Naive thymus-derived CD4-positive, alpha-beta T cell (primary cell): ENCODE measurements at regions of chr14 and their contacts with region 1.

Region 1: DNA sequence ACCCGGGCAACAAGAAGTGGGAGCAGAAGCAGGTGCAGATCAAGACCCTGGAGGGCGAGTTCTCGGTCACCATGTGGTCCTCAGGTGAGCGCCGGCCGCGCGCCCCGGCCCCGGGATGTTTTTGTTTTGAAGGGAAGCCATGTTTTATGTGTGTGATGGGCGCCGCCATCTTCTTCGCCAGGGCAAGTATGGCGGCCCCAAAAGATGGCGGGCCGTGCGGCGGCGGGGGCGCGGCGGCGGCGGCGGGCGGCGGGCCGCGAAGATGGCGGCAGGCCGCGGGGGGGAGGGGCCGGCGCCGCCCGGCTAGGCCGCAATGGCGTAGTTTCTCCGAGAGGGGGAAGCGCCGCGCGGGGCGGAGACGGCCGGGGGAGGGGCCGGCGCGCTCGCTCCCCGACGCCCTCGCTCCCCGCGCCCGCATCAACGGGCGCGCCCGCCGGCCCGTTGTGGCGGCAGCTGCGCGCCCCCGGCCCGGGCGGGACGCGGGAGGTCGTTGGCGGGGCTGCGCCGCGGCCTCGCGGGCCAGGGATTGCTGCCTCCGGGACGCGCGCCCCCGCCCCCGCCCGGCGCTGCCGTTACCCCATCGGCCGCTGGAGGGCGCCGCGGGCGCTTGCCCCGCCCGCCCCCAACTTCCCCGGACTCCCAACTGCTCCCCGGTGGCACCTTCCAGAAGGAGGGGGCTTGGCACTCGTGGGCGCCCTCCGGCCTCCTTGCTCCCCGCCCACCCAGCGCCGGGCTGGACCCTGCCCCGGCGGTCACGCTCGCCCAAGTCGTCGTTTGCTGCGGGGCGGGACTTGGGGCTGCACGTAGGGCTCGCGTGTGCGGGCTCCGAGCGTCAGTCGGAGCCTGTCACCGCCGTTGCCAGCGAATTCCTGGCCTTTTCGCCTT is 1.1 kb downstream of the YY1 start:
- DNase-seq: peak; percentile 81 to 91 (median 88)
- ATAC-seq: peak; percentile 65
- H3K4me3 ChIP-seq: peak overlapping the region; percentile 85
- H3K4me3 Mint-ChIP-seq: peak overlapping the region; percentile 88 to 100 (median 94)
- H3K27ac ChIP-seq: peak overlapping the region; percentile 98
- H3K27ac Mint-ChIP-seq: peak overlapping the region; percentile 85 to 99 (median 96)
- H3K4me1 ChIP-seq: peaks cover 35 to 43% of the 10 kb centered on the region in 2 donors
- H3K4me1 Mint-ChIP-seq: peaks cover 41 to 69% (median 53%) of the 10 kb centered on the region in 7 donors
- H3K27me3 ChIP-seq: no peaks in the 10 kb centered on the region
- H3K27me3 Mint-ChIP-seq: peaks cover 0 to 2% (median 0%) of the 10 kb centered on the region in 5 donors

Region 2: DNA sequence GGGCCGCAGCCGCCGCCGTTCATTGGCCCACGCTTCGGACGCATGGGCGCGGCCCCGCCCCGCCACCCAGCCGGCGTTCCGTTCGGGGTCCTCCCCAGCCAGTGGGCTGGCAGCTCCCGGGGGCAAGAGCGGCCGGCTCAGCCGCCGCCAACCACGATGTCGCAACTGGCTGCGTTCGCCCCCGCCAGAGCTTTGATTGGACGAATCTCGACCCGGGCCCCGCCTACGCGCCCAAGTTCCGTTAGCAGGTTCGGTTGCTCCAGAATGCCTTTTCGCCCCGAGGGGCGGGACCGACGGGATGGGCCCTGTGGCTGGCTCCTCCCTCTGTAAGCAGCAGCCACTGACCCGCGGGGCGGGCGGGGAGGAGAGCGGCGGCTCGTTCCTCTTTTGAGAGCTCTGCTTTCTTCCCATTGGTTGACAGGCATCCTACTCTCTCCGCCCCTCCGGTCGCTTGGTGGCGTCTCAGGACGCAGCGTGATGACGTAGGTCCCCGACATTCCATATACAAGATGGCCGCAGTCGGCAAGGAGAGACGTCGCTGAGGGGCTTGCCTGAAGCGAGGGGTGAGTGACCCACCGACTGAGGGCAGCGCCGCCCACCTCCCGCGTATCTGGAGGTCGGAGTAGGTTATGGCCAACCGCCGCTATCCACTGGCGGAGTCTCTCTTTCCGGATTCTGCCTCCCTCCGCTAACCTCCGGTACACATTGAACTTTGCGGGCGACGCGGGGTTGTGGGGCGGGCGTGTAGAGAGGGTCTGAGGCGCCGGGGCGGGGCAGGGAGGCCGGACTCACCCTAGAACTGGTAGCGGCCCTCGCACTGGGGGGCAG is 759.0 kb before region 1 on chr14 and contains the start of gene CCNK:
- CTCF ChIA-PET with region 1: no interaction called
- POLR2A ChIA-PET with region 1: no interaction called
- intact Hi-C with region 1: loop called (anchors 1 to 5 kb)
- DNase-seq: peak; percentile 98 to 100 (median 100)
- ATAC-seq: peak; percentile 92
- H3K4me3 ChIP-seq: peak within 1 kb of the TSS; percentile 86
- H3K4me3 Mint-ChIP-seq: peak within 1 kb of the TSS; percentile 89 to 100 (median 98)
- H3K27ac ChIP-seq: peak within 1 kb of the TSS; percentile 93
- H3K27ac Mint-ChIP-seq: peak within 1 kb of the TSS; percentile 95 to 99 (median 98)
- H3K4me1 ChIP-seq: peaks cover 26 to 34% of the 10 kb centered on the region in 2 donors
- H3K4me1 Mint-ChIP-seq: peaks cover 44 to 79% (median 70%) of the 10 kb centered on the region in 7 donors
- H3K27me3 ChIP-seq: no peaks in the 10 kb centered on the region
- H3K27me3 Mint-ChIP-seq: no peaks in the 10 kb centered on the region
- total RNA-seq, gene CCNK: 68.4 to 139 (median 81.9) TPM

Region 3: GRCh38 chr14:99563233-99564129 is 676.6 kb before region 1 on chr14:
- CTCF ChIA-PET with region 1: no interaction called
- POLR2A ChIA-PET with region 1: no interaction called
- intact Hi-C with region 1: no loop called
- DNase-seq: no peak
- ATAC-seq: peak; percentile 14
- H3K4me3 ChIP-seq: no peak overlapping the region
- H3K4me3 Mint-ChIP-seq: no peak overlapping the region
- H3K27ac ChIP-seq: no peak overlapping the region
- H3K27ac Mint-ChIP-seq: no peak overlapping the region
- H3K4me1 ChIP-seq: no peaks in the 10 kb centered on the region
- H3K4me1 Mint-ChIP-seq: peaks cover 0 to 10% (median 0%) of the 10 kb centered on the region in 7 donors
- H3K27me3 ChIP-seq: no peaks in the 10 kb centered on the region
- H3K27me3 Mint-ChIP-seq: no peaks in the 10 kb centered on the region

Region 4: DNA sequence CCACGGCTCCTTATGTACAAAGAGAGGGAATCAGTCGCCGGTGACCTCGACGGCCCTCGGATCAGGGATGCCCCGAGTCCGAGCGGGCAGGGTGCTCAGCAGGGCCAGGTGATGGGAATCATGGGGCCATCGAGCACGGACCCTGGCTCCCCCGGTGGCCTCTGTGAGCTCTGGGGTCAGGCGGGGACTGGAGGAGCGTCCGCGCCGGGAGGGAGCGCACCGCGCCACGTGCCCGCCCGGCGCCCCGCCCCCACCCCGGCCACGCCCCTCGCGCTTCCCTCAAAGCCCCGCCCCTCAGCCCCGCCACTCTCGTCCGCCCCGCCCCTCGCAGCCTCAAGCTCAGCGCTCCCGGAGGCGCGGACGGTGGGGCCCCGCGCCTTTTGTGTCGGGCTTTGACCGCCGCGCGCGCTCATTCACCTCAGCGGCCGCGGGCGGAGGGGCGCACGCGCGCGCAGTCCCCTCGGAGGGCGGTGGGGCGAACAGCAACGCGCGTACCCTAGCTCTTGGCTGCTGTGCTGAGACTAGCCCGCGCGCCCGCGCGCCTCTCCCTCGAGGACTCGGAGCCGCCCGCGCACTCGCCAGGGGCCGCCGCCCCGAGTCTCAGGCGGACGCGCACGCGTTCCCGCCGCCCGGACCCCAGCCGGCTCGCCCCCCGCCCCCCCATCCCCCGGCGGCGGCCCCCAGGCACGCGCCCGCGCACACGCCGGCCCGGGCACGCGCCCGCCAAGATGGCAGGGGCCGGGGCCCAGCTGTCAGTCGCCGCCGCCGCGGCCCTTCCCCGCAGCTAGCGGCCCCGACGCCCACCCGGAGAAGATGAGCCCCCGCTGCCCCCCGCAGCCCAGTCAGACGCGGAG is 268.8 kb before region 1 on chr14:
- CTCF ChIA-PET with region 1: no interaction called
- POLR2A ChIA-PET with region 1: interaction called, 3 read pairs
- intact Hi-C with region 1: loop called (anchors 1 to 2 kb)
- DNase-seq: peak; percentile 69 to 87 (median 81)
- ATAC-seq: peak; percentile 95
- H3K4me3 ChIP-seq: peak overlapping the region; percentile 53
- H3K4me3 Mint-ChIP-seq: peak overlapping the region; percentile 43 to 93 (median 76)
- H3K27ac ChIP-seq: peak overlapping the region; percentile 58
- H3K27ac Mint-ChIP-seq: peak overlapping the region in 4 of 9 donors; percentile 21 to 87 (median 48)
- H3K4me1 ChIP-seq: no peaks in the 10 kb centered on the region
- H3K4me1 Mint-ChIP-seq: peaks cover 7 to 21% (median 15%) of the 10 kb centered on the region in 7 donors
- H3K27me3 ChIP-seq: no peaks in the 10 kb centered on the region
- H3K27me3 Mint-ChIP-seq: peaks cover 0 to 33% (median 7%) of the 10 kb centered on the region in 5 donors

Region 5: DNA sequence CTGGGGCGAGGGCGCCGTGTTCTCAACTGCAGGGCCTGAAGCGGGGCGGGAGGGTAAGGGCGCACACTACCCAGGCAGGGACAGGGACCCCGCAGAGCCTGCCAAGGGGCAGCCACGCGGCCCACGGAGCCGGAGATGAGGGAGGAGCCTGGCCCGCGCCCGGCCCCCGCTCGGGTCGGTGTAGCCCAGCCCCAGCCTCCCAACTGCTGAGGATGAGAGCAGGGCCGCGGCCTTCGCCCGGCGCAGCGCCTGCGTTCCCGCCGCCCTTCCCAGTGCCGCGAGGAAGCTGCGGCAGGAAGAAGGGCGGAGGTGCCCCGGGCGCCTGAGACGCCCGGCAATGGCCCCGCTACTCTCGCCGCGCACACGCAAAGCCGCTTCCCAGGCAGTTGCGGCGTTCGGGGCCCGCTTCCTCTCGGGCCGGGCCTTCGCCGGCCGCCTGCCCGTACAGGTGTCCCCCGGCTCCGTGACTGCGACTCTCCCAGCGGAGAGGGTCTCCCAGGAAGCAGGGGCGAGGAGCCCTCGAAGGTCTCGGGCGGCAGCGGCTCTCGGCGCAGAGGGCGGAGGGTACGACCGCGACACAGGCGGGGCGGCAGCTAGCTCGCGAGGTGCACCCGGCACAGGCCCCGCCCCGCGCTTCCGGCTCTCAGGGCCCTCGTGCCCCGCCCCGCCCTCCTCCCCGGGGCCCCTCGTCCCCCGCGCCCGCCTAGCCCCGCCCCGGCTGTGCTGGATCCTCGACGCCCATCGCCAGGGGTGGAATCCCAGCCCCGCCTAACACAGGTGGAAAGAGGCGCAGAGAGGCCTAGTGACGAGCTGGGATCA is 25.9 kb before region 1 on chr14:
- CTCF ChIA-PET with region 1: interaction called, 5 read pairs
- POLR2A ChIA-PET with region 1: interaction called, 232 read pairs
- intact Hi-C with region 1: loop called (anchors 1 kb)
- DNase-seq: peak; percentile 82 to 95 (median 90)
- ATAC-seq: peak; percentile 98
- H3K4me3 ChIP-seq: peak overlapping the region; percentile 90
- H3K4me3 Mint-ChIP-seq: peak overlapping the region; percentile 76 to 89 (median 85)
- H3K27ac ChIP-seq: peak overlapping the region; percentile 97
- H3K27ac Mint-ChIP-seq: peak overlapping the region; percentile 62 to 94 (median 92)
- H3K4me1 ChIP-seq: peaks cover 12 to 19% of the 10 kb centered on the region in 2 donors
- H3K4me1 Mint-ChIP-seq: peaks cover 10 to 39% (median 34%) of the 10 kb centered on the region in 7 donors
- H3K27me3 ChIP-seq: no peaks in the 10 kb centered on the region
- H3K27me3 Mint-ChIP-seq: no peaks in the 10 kb centered on the region

Region 6: DNA sequence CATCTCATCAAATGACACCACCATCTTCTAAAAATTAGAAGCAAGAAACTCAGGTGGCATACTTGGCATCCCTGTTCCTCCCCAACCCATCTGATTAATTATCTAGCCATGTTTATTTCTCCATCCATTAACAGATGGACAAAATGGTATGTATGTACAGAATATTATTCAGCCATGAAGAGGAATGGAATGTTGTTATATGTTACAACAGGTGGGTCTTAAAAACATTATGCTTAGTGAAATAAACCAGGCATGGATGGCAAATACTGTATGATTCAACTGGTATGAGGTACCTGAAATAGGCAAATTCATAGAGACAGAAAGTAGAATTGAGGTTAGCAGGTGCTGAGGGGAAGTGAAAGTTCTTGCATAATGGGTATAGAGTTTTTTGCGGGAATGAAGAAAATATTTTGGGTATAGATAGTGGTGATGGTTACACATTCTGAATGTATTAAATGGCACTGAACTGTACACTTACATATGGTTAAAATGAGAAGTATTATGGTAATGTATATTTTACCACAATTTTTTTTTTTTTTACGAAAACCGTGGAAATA is 16.3 kb after region 1 on chr14:
- CTCF ChIA-PET with region 1: interaction called, 4 read pairs
- POLR2A ChIA-PET with region 1: interaction called, 11 read pairs
- intact Hi-C with region 1: no loop called
- DNase-seq: no peak
- ATAC-seq: peak; percentile 10
- H3K4me3 ChIP-seq: no peak overlapping the region
- H3K4me3 Mint-ChIP-seq: peak overlapping the region in 8 of 10 donors; percentile 0 to 62 (median 42)
- H3K27ac ChIP-seq: no peak overlapping the region
- H3K27ac Mint-ChIP-seq: peak overlapping the region in 8 of 9 donors; percentile 0 to 81 (median 62)
- H3K4me1 ChIP-seq: peaks cover 30 to 58% of the 10 kb centered on the region in 2 donors
- H3K4me1 Mint-ChIP-seq: peaks cover 68 to 93% (median 81%) of the 10 kb centered on the region in 7 donors
- H3K27me3 ChIP-seq: no peaks in the 10 kb centered on the region
- H3K27me3 Mint-ChIP-seq: no peaks in the 10 kb centered on the region

Region 7: DNA sequence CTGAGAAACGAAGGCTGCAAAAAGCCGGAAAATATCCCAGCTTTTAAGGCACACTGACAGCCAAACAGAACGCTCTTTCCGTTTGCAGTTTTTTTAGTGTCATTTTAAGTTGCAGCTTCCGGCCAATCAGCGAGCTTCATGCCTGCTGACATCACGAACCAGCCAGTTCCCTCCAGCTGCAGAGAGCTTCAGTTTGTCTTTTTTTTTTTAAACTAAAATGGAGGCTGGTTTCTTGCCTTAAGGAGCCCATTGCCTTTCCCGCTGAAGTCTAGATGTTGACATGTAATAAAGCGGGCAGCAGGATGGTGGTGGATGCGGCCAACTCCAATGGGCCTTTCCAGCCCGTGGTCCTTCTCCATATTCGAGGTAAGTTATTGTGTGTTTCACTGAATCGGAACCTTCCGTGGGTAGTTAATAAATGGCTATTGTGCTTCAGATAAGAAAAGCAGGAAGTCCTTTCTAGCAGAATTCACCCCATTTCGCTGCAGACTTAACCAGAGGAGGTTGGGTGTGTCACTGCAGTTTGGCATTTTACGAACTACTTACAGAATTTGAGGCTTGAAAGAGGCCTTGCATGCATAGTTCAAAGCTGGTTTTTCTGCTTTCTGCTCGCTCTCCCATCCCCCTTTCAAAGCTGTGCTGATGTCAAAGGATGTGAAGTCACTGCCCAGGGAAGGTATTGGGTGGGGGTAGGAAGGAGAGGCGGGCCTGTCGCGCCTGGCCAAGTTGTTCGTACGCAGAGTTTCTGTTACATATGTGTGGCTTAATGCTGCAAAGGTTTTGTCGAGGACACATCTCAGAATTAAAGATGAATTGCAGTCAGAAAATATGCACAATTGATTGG is 1569.8 kb after region 1 on chr14:
- CTCF ChIA-PET with region 1: no interaction called
- POLR2A ChIA-PET with region 1: no interaction called
- intact Hi-C with region 1: loop called in 1 of 2 experiments (anchors 5 kb)
- DNase-seq: peak; percentile 57 to 97 (median 95)
- ATAC-seq: peak; percentile 94
- H3K4me3 ChIP-seq: peak overlapping the region; percentile 92
- H3K4me3 Mint-ChIP-seq: peak overlapping the region; percentile 94 to 98 (median 96)
- H3K27ac ChIP-seq: peak overlapping the region; percentile 99
- H3K27ac Mint-ChIP-seq: peak overlapping the region; percentile 90 to 100 (median 99)
- H3K4me1 ChIP-seq: peaks cover 36 to 38% of the 10 kb centered on the region in 2 donors
- H3K4me1 Mint-ChIP-seq: peaks cover 27 to 62% (median 55%) of the 10 kb centered on the region in 7 donors
- H3K27me3 ChIP-seq: no peaks in the 10 kb centered on the region
- H3K27me3 Mint-ChIP-seq: no peaks in the 10 kb centered on the region